ENCODE measurements at regions of chr1 and their contacts with region 1.

Region 1: DNA sequence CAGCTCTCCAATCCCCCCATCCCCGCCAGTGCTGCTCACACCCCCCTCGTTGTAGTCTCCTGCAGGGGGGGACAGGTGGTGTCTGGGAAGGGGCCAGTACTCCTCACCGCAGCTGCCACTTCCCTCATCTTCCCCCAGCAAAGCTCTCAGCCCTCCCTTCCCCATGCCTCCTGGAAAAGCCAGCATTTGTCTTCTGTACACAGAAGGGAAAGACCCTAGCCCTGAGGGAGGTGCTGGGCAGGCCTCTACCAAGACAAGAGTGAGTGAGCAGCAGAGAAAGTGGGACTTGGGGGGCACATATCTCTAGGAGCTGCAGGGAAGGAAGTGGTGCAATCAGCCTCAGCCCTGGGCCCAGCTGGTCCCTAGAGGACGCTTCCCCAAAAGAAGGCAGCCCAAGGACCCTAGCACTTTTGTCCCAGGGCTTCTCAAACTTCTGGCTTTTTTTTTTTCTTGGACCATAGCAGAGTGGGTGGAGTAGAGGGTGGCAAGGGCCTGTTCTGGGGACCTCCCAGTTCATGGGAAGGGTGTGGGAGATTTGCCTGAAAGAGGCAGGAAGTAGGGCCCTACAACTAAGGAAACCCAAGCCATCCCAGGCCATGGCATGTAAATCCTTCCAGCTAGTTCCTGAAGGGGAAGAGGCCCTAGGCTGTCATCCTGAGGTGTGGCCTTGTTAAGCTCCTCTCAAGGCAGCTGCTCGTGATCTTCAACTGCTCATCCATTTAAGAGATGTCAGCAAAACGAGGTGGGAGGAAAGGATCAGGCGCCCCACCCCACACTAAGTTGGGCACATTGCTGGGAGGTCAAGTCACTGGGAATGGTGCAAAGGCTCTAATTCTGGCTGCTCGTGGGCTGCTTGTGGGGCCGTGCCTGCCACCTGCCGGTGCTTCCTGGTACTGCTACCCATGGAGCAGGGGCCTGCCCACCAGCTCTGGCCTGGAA is 12.6 kb downstream of the ZC3H12A start:
- DNase-seq: peak; percentile 84
- H3K4me3 Mint-ChIP-seq: no peak overlapping the region
- H3K27ac Mint-ChIP-seq: peak overlapping the region; percentile 1
- H3K4me1 Mint-ChIP-seq: peaks cover 14% of the 10 kb centered on the region
- H3K27me3 Mint-ChIP-seq: no peaks in the 10 kb centered on the region

Region 2: GRCh38 chr1:37449936-37450335 is 37.0 kb before region 1 on chr1:
- CTCF ChIA-PET with region 1: interaction called, 261 read pairs
- DNase-seq: peak; percentile 60
- H3K4me3 Mint-ChIP-seq: no peak overlapping the region
- H3K27ac Mint-ChIP-seq: peak overlapping the region; percentile 69
- H3K4me1 Mint-ChIP-seq: peaks cover 15% of the 10 kb centered on the region
- H3K27me3 Mint-ChIP-seq: peaks cover 32% of the 10 kb centered on the region

Region 3: GRCh38 chr1:37465593-37466517 is 21.1 kb before region 1 on chr1:
- CTCF ChIA-PET with region 1: interaction called, 261 read pairs
- DNase-seq: no peak
- H3K4me3 Mint-ChIP-seq: no peak overlapping the region
- H3K27ac Mint-ChIP-seq: no peak overlapping the region
- H3K4me1 Mint-ChIP-seq: peaks cover 11% of the 10 kb centered on the region
- H3K27me3 Mint-ChIP-seq: no peaks in the 10 kb centered on the region

Region 4: GRCh38 chr1:37474046-37474759 is 12.7 kb before region 1 on chr1 and contains the start of gene ZC3H12A:
- CTCF ChIA-PET with region 1: interaction called, 78 read pairs
- DNase-seq: peak; percentile 92
- H3K4me3 Mint-ChIP-seq: peak within 1 kb of the TSS; percentile 97
- H3K27ac Mint-ChIP-seq: peak within 1 kb of the TSS; percentile 88
- H3K4me1 Mint-ChIP-seq: peaks cover 58% of the 10 kb centered on the region
- H3K27me3 Mint-ChIP-seq: no peaks in the 10 kb centered on the region

Region 5: GRCh38 chr1:37498872-37499617 is 12.1 kb after region 1 on chr1:
- CTCF ChIA-PET with region 1: interaction called, 43 read pairs
- DNase-seq: no peak
- H3K4me3 Mint-ChIP-seq: no peak overlapping the region
- H3K27ac Mint-ChIP-seq: no peak overlapping the region
- H3K4me1 Mint-ChIP-seq: peaks cover 2% of the 10 kb centered on the region
- H3K27me3 Mint-ChIP-seq: no peaks in the 10 kb centered on the region

Region 6: DNA sequence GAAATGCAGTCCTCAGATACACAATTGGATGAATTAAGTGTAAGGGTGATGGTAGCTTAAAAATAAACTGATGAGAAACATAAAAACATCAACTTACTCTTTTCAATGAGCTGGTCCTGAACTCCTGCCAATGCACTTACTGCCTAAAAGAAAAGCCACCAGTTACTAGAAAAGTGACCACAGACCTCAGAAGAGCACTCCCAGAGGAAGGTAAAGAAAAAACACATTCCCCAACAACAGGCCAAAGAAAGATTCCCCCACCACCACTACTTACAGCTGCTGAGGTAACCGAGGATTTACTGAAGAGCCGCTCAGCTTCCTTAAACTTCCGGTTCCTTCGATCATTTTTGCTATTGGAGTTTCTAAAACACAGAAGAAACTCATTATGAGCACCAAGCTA is 22.2 kb after region 1 on chr1:
- CTCF ChIA-PET with region 1: interaction called, 17 read pairs
- DNase-seq: no peak
- H3K4me3 Mint-ChIP-seq: no peak overlapping the region
- H3K27ac Mint-ChIP-seq: no peak overlapping the region
- H3K4me1 Mint-ChIP-seq: peaks cover 30% of the 10 kb centered on the region
- H3K27me3 Mint-ChIP-seq: no peaks in the 10 kb centered on the region

Region 7: DNA sequence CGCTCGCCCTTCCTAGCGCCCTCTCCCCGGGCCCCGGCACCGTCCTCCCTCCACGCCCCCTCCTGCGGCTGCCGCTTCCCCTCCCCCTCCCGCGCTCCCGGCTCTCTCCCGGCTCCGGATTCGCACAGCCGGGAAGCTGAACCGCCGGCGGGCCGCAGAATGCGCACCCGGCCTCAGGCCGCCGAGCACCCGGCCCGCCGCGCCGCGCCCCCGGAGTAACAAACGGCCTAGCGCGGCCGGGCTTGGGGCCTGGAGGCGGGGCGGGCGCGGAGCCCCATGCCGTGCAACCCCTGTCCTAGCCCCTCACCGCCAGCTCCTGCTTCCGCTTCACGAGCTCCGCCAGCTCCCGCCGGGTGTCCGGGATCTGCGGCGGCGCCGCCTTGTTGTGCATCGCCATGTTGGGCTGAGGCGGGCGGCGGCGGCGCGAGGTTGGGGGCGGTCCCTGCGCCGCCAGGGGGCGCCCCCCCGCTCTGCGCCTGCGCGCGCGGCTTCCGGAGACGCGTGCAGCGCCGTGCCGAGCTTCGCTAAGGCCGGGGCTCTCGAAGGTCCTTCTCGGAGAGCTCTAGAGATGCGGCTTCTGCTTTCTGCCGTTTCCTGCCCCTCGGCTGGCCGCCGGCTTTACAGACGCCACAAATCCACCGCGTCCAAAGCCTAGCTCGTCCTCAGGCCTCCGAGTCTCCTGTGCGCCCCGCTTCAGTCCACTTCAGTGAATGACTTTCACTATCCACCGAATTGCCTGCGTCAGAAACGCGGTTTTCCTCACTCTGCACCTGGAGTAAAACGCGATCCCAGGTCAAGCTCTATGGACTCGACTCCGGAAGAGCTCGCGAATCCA is 27.6 kb after region 1 on chr1 and contains the start of gene MEAF6:
- CTCF ChIA-PET with region 1: interaction called, 17 read pairs
- DNase-seq: peak; percentile 87
- H3K4me3 Mint-ChIP-seq: peak within 1 kb of the TSS; percentile 88
- H3K27ac Mint-ChIP-seq: peak within 1 kb of the TSS; percentile 96
- H3K4me1 Mint-ChIP-seq: peaks cover 40% of the 10 kb centered on the region
- H3K27me3 Mint-ChIP-seq: peaks cover 4% of the 10 kb centered on the region